ENCODE measurements at regions of chr16 and their contacts with region 1.

Region 1: GRCh38 chr16:70653809-70654771 is 7.7 kb downstream of the IL34 start:
- DNase-seq: peak; percentile 44 to 96
- H3K4me3 ChIP-seq: no peak overlapping the region
- H3K27ac ChIP-seq: no peak overlapping the region
- H3K4me1 ChIP-seq: peaks cover 0 to 3% (median 0%) of the 10 kb centered on the region in 4 experiments; a peak in 3 of 7 replicates
- H3K27me3 ChIP-seq: no peaks in the 10 kb centered on the region; a peak in 2 of 7 replicates
- CTCF ChIP-seq: peak; percentile 49 to 86 (median 83)
- EP300 ChIP-seq: no peak
- POLR2A ChIP-seq: no peak
- RAD21 ChIP-seq: peak; percentile 97

Region 2: DNA sequence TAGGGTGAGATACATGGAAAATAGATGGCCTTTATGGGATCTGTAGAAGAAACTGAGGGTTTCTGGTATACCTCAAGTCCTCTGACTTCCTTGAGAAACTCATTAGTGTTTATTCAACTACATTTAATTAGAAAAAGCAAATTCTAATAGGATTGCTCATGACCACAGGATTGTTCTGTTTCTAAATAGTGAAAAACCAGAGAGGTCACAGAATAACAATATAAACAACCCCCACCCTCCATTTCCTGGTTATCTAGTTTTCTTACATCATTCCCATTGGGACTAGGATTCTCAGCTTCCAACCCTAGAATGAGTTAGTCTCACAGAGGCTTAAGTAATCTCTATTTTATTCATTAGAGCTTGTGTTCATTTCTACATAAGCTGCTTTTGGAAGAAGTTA is 100.4 kb before region 1 on chr16:
- CTCF ChIA-PET with region 1: interaction called, 10 read pairs
- POLR2A ChIA-PET with region 1: interaction called, 3 read pairs
- DNase-seq: no peak
- H3K4me3 ChIP-seq: no peak overlapping the region
- H3K27ac ChIP-seq: no peak overlapping the region
- H3K4me1 ChIP-seq: no peaks in the 10 kb centered on the region
- H3K27me3 ChIP-seq: no peaks in the 10 kb centered on the region
- CTCF ChIP-seq: no peak
- EP300 ChIP-seq: no peak
- POLR2A ChIP-seq: no peak
- RAD21 ChIP-seq: no peak

Region 3: DNA sequence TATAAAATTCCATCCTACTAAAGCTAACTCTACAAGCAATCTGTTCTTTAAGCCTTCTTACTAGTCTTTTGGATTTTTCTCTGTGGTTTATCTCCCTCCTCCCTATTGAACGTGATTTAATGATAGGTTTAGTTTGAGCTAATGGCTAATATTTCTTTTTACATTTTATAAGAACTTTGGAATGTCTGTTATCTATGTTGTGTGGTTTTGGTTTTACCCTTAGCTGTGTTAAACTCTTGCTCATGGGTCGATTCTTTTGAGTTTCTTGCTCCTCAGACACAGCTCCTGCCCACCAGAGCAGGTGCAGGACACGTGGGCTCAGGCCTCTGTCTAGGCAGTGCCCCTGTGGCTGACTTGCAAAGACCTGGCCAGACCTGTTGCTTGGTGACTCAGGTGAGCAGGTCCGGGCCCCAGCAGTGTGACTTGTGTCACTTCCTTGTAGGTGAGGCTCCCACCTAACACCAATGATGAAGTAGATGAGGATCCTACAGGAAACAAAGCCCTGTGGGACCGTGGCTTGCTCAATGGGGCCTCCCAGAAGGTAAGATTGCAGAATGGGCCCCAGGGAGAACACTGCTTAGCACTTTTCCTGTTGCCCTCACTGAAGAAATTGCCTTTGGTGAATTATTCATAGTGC is 85.4 kb before region 1 on chr16:
- CTCF ChIA-PET with region 1: interaction called, 65 read pairs
- POLR2A ChIA-PET with region 1: interaction called, 14 read pairs
- DNase-seq: no peak
- H3K4me3 ChIP-seq: no peak overlapping the region
- H3K27ac ChIP-seq: no peak overlapping the region
- H3K4me1 ChIP-seq: no peaks in the 10 kb centered on the region
- H3K27me3 ChIP-seq: no peaks in the 10 kb centered on the region
- CTCF ChIP-seq: no peak
- EP300 ChIP-seq: no peak
- POLR2A ChIP-seq: no peak
- RAD21 ChIP-seq: no peak

Region 4: DNA sequence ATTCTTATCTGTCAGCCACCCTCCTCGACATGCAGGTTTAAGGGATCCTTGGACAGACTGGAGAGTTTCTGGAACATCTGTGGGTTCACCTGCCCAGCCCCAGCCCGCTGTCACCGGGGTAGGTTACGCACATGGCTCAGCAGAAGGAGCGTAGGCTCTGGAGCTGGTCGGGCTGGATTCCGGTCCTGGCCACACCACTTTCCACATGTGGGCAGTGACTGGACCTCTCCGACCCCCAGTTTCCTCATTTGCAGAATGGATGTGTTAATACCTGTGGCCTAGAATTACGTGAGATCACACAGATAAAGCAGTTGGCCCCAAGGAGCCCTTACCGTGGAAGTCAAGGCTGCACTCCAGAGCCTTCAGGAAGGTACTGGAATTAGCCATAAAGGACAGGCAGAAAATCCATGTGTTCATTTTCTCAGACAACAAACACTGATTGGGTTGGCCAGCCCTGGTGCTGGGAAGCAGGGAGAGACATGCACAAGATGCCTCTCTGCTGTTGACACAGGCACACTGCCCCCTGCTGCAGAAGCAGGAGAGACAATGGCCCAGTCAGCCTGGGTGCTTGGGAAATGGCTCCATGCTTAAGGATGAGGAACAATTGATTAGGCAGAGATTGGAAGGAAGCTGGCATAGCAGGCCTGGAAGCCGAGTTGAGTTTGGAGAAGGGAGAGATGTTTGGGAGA is 71.7 kb before region 1 on chr16:
- CTCF ChIA-PET with region 1: interaction called, 56 read pairs
- POLR2A ChIA-PET with region 1: interaction called, 26 read pairs
- DNase-seq: no peak
- H3K4me3 ChIP-seq: no peak overlapping the region
- H3K27ac ChIP-seq: no peak overlapping the region
- H3K4me1 ChIP-seq: no peaks in the 10 kb centered on the region
- H3K27me3 ChIP-seq: no peaks in the 10 kb centered on the region
- CTCF ChIP-seq: peak; percentile 19 to 67 (median 61); a peak in 3 of 4 replicates
- EP300 ChIP-seq: no peak
- POLR2A ChIP-seq: no peak
- RAD21 ChIP-seq: peak; percentile 27 to 42; a peak in 3 of 4 replicates

Region 5: GRCh38 chr16:70601576-70602575 is 52.2 kb before region 1 on chr16:
- CTCF ChIA-PET with region 1: interaction called, 36 read pairs
- POLR2A ChIA-PET with region 1: no interaction called
- DNase-seq: no peak
- H3K4me3 ChIP-seq: no peak overlapping the region
- H3K27ac ChIP-seq: no peak overlapping the region
- H3K4me1 ChIP-seq: no peaks in the 10 kb centered on the region
- H3K27me3 ChIP-seq: 0 out of 7 replicates have a peak, but pooled peaks cover 0 to 2% (median 0%) of the 10 kb centered on the region in 4 experiments
- CTCF ChIP-seq: no peak
- EP300 ChIP-seq: no peak
- POLR2A ChIP-seq: no peak
- RAD21 ChIP-seq: no peak

Region 6: GRCh38 chr16:70632273-70632672 is 21.8 kb before region 1 on chr16:
- CTCF ChIA-PET with region 1: interaction called, 12 read pairs
- POLR2A ChIA-PET with region 1: interaction called, 6 read pairs
- DNase-seq: no peak
- H3K4me3 ChIP-seq: no peak overlapping the region
- H3K27ac ChIP-seq: no peak overlapping the region
- H3K4me1 ChIP-seq: peaks cover 0 to 2% (median 0%) of the 10 kb centered on the region in 4 experiments; a peak in 1 of 7 replicates
- H3K27me3 ChIP-seq: no peaks in the 10 kb centered on the region
- CTCF ChIP-seq: no peak
- EP300 ChIP-seq: no peak
- POLR2A ChIP-seq: no peak
- RAD21 ChIP-seq: no peak

Region 7: DNA sequence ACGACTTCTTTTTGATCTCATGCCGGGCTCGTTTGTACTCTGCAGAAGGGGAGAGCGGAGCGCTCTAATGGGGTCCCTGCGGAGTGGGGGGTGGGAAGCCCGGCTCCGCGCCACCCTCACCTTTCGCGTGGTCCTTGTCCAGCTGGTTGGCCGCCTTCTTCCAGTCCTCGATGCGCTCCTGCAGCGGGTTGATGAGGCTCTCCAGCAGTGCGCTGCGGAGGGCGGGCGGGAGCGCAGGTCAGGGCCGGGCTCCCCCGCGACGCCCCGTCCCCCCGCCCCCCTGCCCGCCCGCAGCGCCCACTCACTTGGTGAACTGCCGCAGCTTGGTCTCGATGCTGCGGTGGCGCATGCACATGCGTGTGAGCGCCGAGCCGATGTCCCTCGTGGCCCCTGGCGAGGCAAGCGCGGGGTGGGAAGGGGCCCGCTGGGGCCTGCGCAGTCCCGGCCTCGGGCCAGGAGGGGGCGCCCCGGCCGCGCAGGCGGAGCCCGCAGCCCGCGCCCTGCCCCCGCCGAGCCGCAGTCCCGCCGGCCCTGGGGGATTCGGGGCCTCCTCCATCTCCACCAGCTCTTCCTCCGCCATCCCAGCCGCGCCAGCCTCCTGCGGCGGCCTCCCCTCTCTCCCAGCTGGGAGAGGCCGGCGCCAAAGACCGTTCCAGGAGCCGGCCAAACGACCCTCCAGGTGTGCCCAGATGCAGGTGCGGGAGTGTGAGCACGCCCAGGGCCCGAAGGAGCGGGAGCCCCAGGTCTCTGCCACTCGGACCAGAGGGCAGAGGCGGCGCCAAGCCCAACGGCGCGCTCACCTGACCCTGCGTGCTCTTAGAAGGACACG is 25.8 kb after region 1 on chr16:
- CTCF ChIA-PET with region 1: interaction called, 15 read pairs
- POLR2A ChIA-PET with region 1: interaction called, 6 read pairs
- DNase-seq: peak in 1 of 2 experiments; percentile 84
- H3K4me3 ChIP-seq: peak overlapping the region in 1 of 4 experiments; percentile 47; a peak in 2 of 8 replicates
- H3K27ac ChIP-seq: no peak overlapping the region
- H3K4me1 ChIP-seq: peaks cover 0 to 14% (median 4%) of the 10 kb centered on the region in 4 experiments; a peak in 5 of 7 replicates
- H3K27me3 ChIP-seq: peaks cover 0 to 5% (median 3%) of the 10 kb centered on the region in 4 experiments; a peak in 4 of 7 replicates
- CTCF ChIP-seq: peak in 2 of 3 experiments; percentile 73 to 86; a peak in 3 of 4 replicates
- EP300 ChIP-seq: no peak
- POLR2A ChIP-seq: no peak
- RAD21 ChIP-seq: peak; percentile 47 to 82

Region 8: DNA sequence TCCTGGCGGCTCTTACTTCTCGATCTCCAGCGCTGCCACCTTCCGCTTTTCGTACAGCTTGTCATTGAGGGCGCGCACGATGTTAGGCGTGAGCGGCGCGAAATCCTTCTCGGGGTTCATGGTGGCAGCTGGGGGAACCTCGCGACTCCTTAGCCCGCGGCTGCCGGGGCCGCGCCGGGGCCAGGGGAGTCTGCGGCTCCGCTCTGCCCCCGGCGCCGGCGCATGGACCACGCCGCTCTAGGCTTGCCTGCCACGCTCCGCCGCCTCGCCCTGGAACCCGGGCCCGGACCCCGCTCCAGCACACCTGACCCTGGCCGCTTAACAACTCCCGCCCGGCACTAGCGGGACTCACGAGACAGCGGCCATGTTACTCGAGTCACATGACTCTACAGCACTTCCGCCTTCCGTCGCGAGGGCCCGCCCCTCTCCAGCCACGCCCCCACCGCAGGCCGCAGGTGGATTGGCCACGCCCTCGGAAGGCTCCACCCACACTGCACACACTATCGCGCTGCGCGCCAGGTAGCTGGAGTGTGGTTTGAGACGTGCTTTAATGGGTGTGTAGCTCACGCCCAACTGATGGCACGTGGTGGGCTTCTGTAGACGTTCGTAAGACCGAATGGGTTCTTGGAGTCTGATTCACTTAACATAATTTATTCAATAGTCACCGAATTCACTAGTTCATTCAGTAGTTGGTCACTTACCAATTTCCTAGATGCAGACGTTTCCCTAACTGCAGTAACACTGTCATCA is 146.9 kb after region 1 on chr16 and contains the start of gene VAC14:
- CTCF ChIA-PET with region 1: no interaction called
- POLR2A ChIA-PET with region 1: no interaction called
- DNase-seq: peak; percentile 81 to 99
- H3K4me3 ChIP-seq: peak within 1 kb of the TSS; percentile 94 to 100 (median 95)
- H3K27ac ChIP-seq: peak within 1 kb of the TSS; percentile 66
- H3K4me1 ChIP-seq: peaks cover 1 to 5% (median 3%) of the 10 kb centered on the region in 4 experiments; a peak in 5 of 7 replicates
- H3K27me3 ChIP-seq: peaks cover 0 to 10% (median 2%) of the 10 kb centered on the region in 4 experiments; a peak in 5 of 7 replicates
- CTCF ChIP-seq: no peak
- EP300 ChIP-seq: no peak
- POLR2A ChIP-seq: peak; percentile 88 to 89
- RAD21 ChIP-seq: no peak
- total RNA-seq, gene VAC14: 52.8 and 56.0 TPM in 2 replicates

Measured in H1 (cell line).